ENCODE measurements at regions of chr1 and their contacts with region 1.

Region 1: DNA sequence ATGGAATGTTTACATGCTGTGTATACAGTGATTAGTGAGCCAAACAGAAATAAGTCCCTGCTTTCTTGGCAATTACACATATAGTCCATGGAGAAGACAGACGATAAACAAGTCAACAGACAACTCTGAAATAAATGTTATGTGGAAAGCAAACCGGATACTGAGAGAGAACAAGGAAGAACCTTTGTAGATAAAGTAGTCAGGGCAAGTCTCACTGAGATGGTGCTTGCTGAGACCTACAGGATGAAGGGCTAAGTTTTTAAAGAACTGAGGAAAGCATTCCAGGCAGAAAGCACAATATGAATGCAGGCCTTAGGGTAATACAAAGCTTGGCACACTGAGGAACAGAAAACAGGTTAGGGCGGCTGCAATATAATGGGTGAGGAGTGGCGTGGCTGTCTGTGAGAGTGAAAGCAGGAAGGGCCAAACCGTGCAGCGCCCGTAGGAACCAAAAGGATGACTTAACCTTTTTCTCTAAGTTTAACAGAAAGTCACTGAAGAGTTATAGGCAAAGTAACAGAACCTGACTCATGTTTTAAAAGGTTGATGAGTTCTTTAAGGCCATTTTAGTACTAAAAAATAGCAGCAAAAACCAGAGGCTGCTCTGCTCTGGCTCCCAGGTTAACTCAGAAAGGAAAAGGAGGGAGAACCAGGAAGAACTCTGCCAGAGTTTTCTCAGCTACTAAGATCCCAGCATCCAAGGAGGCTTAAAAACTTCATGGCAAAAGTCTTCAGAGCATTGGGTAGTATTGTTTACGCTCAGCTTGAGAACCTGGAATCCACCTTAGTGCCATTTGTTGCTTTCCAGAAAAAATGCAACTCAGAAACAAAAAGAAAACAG is 8.7 kb upstream of the TTF2 start:
- DNase-seq: no peak
- H3K4me3 ChIP-seq: no peak overlapping the region
- H3K27ac ChIP-seq: no peak overlapping the region
- H3K4me1 ChIP-seq: no peaks in the 10 kb centered on the region
- H3K27me3 ChIP-seq: no peaks in the 10 kb centered on the region
- CTCF ChIP-seq: no peak
- EP300 ChIP-seq: no peak
- POLR2A ChIP-seq: no peak

Region 2: DNA sequence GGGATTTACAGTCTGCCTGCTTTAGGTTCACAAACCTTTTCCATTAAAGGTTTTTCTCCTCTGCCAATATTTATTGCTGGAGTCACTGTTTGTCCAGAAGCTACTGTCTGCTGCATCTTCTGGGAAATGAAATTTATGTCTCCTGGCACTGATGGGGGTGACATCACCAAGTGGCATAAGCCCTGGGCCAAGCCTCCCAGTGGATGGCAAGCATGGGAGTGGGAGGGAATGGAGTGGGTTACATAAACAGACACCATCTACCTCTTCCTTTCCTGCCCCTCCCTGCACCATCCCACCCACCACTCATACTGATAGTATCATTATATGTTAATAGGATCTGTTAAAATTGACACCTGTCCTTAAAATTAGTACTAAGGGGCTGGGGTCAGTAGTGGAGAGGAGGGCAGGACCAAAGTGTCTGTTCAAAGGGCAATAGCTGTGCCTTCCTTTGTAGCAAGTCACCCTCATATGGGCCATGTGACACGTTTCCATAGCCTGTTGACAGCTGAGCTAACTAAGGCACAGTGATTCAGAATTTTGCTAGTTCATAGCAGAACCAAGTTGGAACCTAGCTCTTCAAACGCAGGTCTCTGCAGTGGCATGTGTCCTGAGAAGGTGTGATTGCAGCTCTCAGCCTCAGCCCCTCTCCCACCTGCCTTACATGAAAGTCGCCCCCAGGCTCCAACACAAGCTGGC is 869.3 kb before region 1 on chr1:
- intact Hi-C with region 1: no loop called
- DNase-seq: no peak
- H3K4me3 ChIP-seq: no peak overlapping the region
- H3K27ac ChIP-seq: no peak overlapping the region
- H3K4me1 ChIP-seq: no peaks in the 10 kb centered on the region
- H3K27me3 ChIP-seq: no peaks in the 10 kb centered on the region
- CTCF ChIP-seq: no peak
- EP300 ChIP-seq: no peak
- POLR2A ChIP-seq: no peak

Region 3: GRCh38 chr1:116570358-116571200 is 480.9 kb before region 1 on chr1 and contains the start of gene CD58:
- intact Hi-C with region 1: loop called in 2 of 4 experiments (anchors 5 kb)
- DNase-seq: peak; percentile 76 to 86 (median 80)
- H3K4me3 ChIP-seq: peak within 1 kb of the TSS; percentile 97
- H3K27ac ChIP-seq: peak within 1 kb of the TSS; percentile 79 to 85
- H3K4me1 ChIP-seq: no peaks in the 10 kb centered on the region
- H3K27me3 ChIP-seq: no peaks in the 10 kb centered on the region
- CTCF ChIP-seq: peak in 2 of 3 donors; percentile 38 to 45
- EP300 ChIP-seq: no peak
- POLR2A ChIP-seq: peak; percentile 28
- total RNA-seq, gene CD58: 5.2 to 10.9 (median 6.3) TPM

Region 4: GRCh38 chr1:116853670-116854402 is 197.6 kb before region 1 on chr1:
- intact Hi-C with region 1: loop called in 3 of 4 experiments (anchors 2 to 10 kb)
- DNase-seq: no peak
- H3K4me3 ChIP-seq: no peak overlapping the region
- H3K27ac ChIP-seq: no peak overlapping the region
- H3K4me1 ChIP-seq: peaks cover 4% of the 10 kb centered on the region
- H3K27me3 ChIP-seq: no peaks in the 10 kb centered on the region
- CTCF ChIP-seq: no peak
- EP300 ChIP-seq: no peak
- POLR2A ChIP-seq: no peak

Region 5: GRCh38 chr1:117198097-117198496 is 146.7 kb after region 1 on chr1:
- intact Hi-C with region 1: no loop called
- DNase-seq: no peak
- H3K4me3 ChIP-seq: no peak overlapping the region
- H3K27ac ChIP-seq: no peak overlapping the region
- H3K4me1 ChIP-seq: no peaks in the 10 kb centered on the region
- H3K27me3 ChIP-seq: no peaks in the 10 kb centered on the region
- CTCF ChIP-seq: no peak
- EP300 ChIP-seq: no peak
- POLR2A ChIP-seq: no peak